Calu3 (cell line): ENCODE measurements at regions of chr2 and their contacts with region 1.

Region 1: GRCh38 chr2:28392297-28393113 is at the start of gene FOSL2:
- DNase-seq: peak; percentile 96
- H3K4me3 Mint-ChIP-seq: no peak within 1 kb of the TSS
- H3K27ac Mint-ChIP-seq: peak within 1 kb of the TSS; percentile 65
- H3K4me1 Mint-ChIP-seq: peaks cover 25% of the 10 kb centered on the region
- H3K27me3 Mint-ChIP-seq: no peaks in the 10 kb centered on the region
- CTCF ChIP-seq: no peak
- total RNA-seq, gene FOSL2: 53.7 and 57.3 TPM in 2 replicates

Region 2: DNA sequence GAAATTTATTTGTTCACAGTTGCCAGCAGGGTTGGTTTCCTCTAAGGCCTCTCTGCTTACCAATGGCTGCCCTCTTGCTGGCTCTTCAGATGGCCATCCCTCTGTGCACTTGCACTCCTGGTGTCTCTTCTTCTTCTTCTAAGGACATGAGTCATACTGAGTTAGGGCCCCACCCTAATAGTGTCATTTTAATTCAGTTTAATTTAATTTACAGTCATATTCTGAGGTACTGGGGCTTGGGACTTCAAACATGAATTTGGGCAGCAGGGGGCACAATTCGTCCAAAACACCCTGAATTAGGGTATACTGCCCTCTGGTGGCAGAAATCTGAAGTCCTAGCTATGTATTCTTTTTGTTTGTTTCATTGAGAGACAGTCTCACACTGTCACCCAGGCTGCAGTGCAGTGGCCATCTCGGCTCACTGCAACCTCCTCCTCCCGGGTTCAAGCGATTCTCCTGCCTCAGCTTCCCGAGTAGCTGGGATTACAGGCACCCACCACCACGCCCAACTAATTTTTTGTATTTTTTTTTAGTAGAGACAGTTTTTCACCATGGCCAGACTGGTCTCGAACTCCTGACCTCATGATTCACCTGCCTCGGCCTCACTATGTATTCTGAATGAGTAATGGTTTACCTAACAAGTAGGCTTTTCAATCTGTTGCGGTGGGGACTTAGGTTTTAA is 709.0 kb before region 1 on chr2:
- CTCF ChIA-PET with region 1: interaction called, 10 read pairs
- intact Hi-C with region 1: no loop called
- DNase-seq: peak; percentile 88
- H3K4me3 Mint-ChIP-seq: peak overlapping the region; percentile 9
- H3K27ac Mint-ChIP-seq: peak overlapping the region; percentile 92
- H3K4me1 Mint-ChIP-seq: peaks cover 40% of the 10 kb centered on the region
- H3K27me3 Mint-ChIP-seq: no peaks in the 10 kb centered on the region
- CTCF ChIP-seq: peak; percentile 96

Region 3: DNA sequence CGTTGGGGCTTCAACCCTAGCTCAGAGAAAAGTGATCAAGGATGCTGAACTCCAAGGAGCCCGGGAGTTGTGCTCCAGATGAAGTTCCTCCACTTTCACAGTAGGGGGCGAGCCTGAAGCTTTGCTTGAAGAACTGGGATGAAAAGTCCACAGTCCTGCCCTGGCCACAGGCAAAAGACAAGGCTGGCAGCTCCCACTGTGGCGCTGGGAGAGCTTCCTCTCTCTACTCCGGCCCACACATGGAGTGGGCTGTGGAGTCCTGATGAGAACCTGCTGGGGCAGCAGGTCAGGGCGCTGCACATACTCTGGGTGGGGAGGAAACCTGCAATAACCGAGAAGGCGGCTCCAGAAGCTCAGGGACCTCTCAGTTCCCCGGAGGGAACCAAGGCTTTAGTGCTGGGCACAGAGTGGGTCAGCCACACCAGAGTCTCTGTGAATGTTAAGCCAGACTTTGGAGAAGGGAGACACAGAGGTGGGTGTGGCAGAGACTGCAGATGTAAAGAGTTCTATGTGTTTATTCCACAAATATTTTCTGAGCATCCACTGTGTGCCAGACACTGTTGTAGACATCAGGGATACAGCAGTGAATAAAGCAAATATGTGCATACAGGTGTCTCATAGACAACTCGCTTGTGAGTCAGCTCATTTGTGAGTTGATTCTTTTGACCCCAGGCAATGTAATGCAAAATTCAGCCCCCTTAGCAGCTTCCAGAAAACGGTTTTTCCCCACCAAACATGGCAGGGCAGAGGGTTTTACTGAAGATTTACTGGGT is 668.9 kb before region 1 on chr2:
- CTCF ChIA-PET with region 1: no interaction called
- intact Hi-C with region 1: loop called (anchors 5 kb)
- DNase-seq: peak; percentile 72
- H3K4me3 Mint-ChIP-seq: no peak overlapping the region
- H3K27ac Mint-ChIP-seq: peak overlapping the region; percentile 53
- H3K4me1 Mint-ChIP-seq: peaks cover 45% of the 10 kb centered on the region
- H3K27me3 Mint-ChIP-seq: no peaks in the 10 kb centered on the region
- CTCF ChIP-seq: peak; percentile 66

Region 4: GRCh38 chr2:27807476-27807875 is 585.0 kb before region 1 on chr2:
- CTCF ChIA-PET with region 1: no interaction called
- intact Hi-C with region 1: loop called (anchors 10 kb)
- DNase-seq: peak; percentile 61
- H3K4me3 Mint-ChIP-seq: no peak overlapping the region
- H3K27ac Mint-ChIP-seq: no peak overlapping the region
- H3K4me1 Mint-ChIP-seq: peaks cover 28% of the 10 kb centered on the region
- H3K27me3 Mint-ChIP-seq: no peaks in the 10 kb centered on the region
- CTCF ChIP-seq: peak; percentile 59

Region 5: GRCh38 chr2:27932396-27932795 is 460.1 kb before region 1 on chr2:
- CTCF ChIA-PET with region 1: no interaction called
- intact Hi-C with region 1: loop called (anchors 5 kb)
- DNase-seq: no peak
- H3K4me3 Mint-ChIP-seq: no peak overlapping the region
- H3K27ac Mint-ChIP-seq: peak overlapping the region; percentile 62
- H3K4me1 Mint-ChIP-seq: peaks cover 42% of the 10 kb centered on the region
- H3K27me3 Mint-ChIP-seq: no peaks in the 10 kb centered on the region
- CTCF ChIP-seq: no peak

Region 6: GRCh38 chr2:28155627-28156026 is 236.9 kb before region 1 on chr2:
- CTCF ChIA-PET with region 1: interaction called, 4 read pairs
- intact Hi-C with region 1: loop called (anchors 10 kb)
- DNase-seq: peak; percentile 10
- H3K4me3 Mint-ChIP-seq: no peak overlapping the region
- H3K27ac Mint-ChIP-seq: no peak overlapping the region
- H3K4me1 Mint-ChIP-seq: peaks cover 2% of the 10 kb centered on the region
- H3K27me3 Mint-ChIP-seq: no peaks in the 10 kb centered on the region
- CTCF ChIP-seq: peak; percentile 41

Region 7: DNA sequence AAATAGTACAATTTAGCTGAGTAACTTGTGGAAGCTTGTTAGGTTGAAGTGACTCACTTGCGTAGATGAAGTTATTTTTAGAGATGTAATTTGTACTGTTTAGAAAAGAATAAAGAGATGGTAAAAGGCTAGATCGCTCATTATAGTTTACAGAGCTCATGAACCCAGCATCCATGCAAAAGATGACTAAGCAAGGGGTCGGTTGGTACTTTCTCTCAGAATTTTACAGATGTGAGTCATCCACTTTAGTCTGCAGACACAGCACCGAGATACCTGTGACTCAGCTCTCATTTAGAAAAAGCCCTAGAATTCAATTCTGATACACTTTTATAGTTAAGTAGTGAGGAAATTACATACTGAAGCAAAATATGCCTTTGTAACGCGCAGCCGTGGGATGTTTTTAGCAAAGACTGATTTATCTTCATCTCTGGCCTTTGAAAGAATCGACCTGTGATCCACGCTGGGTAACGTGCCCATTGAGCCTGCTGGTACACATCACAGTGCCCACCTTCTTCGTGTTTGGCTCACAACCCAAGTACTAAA is 116.4 kb before region 1 on chr2:
- CTCF ChIA-PET with region 1: interaction called, 4 read pairs
- intact Hi-C with region 1: loop called (anchors 5 kb)
- DNase-seq: peak; percentile 33
- H3K4me3 Mint-ChIP-seq: no peak overlapping the region
- H3K27ac Mint-ChIP-seq: peak overlapping the region; percentile 37
- H3K4me1 Mint-ChIP-seq: peaks cover 76% of the 10 kb centered on the region
- H3K27me3 Mint-ChIP-seq: no peaks in the 10 kb centered on the region
- CTCF ChIP-seq: no peak

Region 8: GRCh38 chr2:28566521-28567041 is 174.1 kb after region 1 on chr2:
- CTCF ChIA-PET with region 1: no interaction called
- intact Hi-C with region 1: no loop called
- DNase-seq: peak; percentile 93
- H3K4me3 Mint-ChIP-seq: peak overlapping the region; percentile 75
- H3K27ac Mint-ChIP-seq: peak overlapping the region; percentile 26
- H3K4me1 Mint-ChIP-seq: no peaks in the 10 kb centered on the region
- H3K27me3 Mint-ChIP-seq: no peaks in the 10 kb centered on the region
- CTCF ChIP-seq: peak; percentile 99

Region 9: GRCh38 chr2:28621172-28622100 is 228.9 kb after region 1 on chr2:
- CTCF ChIA-PET with region 1: no interaction called
- intact Hi-C with region 1: no loop called
- DNase-seq: peak; percentile 84
- H3K4me3 Mint-ChIP-seq: peak overlapping the region; percentile 61
- H3K27ac Mint-ChIP-seq: peak overlapping the region; percentile 99
- H3K4me1 Mint-ChIP-seq: peaks cover 69% of the 10 kb centered on the region
- H3K27me3 Mint-ChIP-seq: no peaks in the 10 kb centered on the region
- CTCF ChIP-seq: peak; percentile 67